ENCODE measurements at regions of chr1 and their contacts with region 1.

Region 1: GRCh38 chr1:91511386-91511785 is 10.7 kb downstream of the CDC7 start:
- DNase-seq: no peak
- H3K4me3 ChIP-seq: no peak overlapping the region
- H3K27ac ChIP-seq: no peak overlapping the region
- H3K4me1 ChIP-seq: peaks cover 0 to 4% of the 10 kb centered on the region in 2 donors
- H3K27me3 ChIP-seq: no peaks in the 10 kb centered on the region
- CTCF ChIP-seq: peak; percentile 57 to 74 (median 69)
- POLR2A ChIP-seq: no peak

Region 2: DNA sequence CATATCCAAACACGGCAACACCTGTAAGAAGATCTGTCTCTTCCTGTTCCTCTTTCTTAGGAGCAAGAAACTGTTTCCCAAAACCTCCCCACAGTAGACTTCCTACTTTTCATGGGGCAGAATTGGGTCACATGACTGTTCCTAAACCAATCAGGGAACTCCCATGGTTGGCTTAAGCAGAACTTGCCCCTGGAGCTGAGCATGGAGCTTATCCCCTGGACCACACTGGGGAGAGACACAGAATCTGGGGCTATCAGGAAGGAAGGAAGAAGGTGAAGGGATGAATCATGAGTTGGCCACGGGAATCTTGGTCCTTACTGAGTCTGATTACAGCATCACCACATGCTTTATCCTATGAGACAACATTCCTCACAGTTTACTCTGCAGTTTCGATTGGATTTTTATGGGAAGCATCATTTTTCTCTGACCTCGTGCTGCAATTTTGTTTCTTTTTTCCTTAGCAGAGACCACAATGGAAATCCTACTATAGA is 71.1 kb after region 1 on chr1:
- intact Hi-C with region 1: no loop called
- DNase-seq: no peak
- H3K4me3 ChIP-seq: no peak overlapping the region
- H3K27ac ChIP-seq: peak overlapping the region in 1 of 5 donors; percentile 23
- H3K4me1 ChIP-seq: peaks cover 0 to 5% of the 10 kb centered on the region in 2 donors
- H3K27me3 ChIP-seq: no peaks in the 10 kb centered on the region
- CTCF ChIP-seq: no peak
- POLR2A ChIP-seq: no peak

Region 3: DNA sequence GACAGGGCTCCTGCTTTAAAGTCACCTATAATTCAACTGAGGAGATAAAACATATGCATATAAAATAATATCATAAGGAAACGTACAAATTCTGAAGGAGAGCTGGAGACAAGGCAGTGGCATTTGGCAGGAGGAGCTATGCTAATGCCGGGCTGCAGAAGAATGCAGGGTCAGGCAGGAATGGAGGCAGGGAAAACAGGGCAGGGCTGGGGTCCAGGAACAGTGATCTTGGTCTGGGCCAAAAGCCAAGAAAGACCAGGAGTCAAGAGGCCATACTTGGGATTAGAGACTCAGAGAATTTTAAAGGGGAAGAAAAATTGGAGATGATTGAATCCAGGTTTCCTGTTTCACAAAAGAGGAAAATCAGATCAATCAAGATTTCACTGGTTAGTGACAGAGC is 417.9 kb after region 1 on chr1:
- intact Hi-C with region 1: loop called (anchors 5 kb)
- DNase-seq: peak in 6 of 7 donors; percentile 26 to 78 (median 60)
- H3K4me3 ChIP-seq: no peak overlapping the region
- H3K27ac ChIP-seq: no peak overlapping the region
- H3K4me1 ChIP-seq: peaks cover 3 to 6% of the 10 kb centered on the region in 2 donors
- H3K27me3 ChIP-seq: no peaks in the 10 kb centered on the region
- CTCF ChIP-seq: no peak
- POLR2A ChIP-seq: no peak

Region 4: GRCh38 chr1:92298573-92299476 is 787.4 kb after region 1 on chr1 and contains the starts of genes GLMN and RPAP2:
- intact Hi-C with region 1: loop called in 1 of 2 experiments (anchors 10 kb)
- DNase-seq: peak; percentile 73 to 84 (median 82)
- H3K4me3 ChIP-seq: peak within 1 kb of the TSS; percentile 18 to 81 (median 75)
- H3K27ac ChIP-seq: peak within 1 kb of the TSS; percentile 72 to 96 (median 92)
- H3K4me1 ChIP-seq: peaks cover 6 to 26% of the 10 kb centered on the region in 2 donors
- H3K27me3 ChIP-seq: no peaks in the 10 kb centered on the region
- CTCF ChIP-seq: peak in 1 of 6 experiments; percentile 22
- POLR2A ChIP-seq: peak; percentile 53 to 86
- total RNA-seq, gene GLMN: 1.1 to 15.1 (median 5.9) TPM
- total RNA-seq, gene RPAP2: 2.3 to 29.0 (median 16.5) TPM